Activated naive CD4-positive, alpha-beta T cell treated with anti-CD3 and anti-CD28 coated beads for 36 hours (primary cell): ENCODE measurements at regions of chr5 and their contacts with region 1.

Region 1: DNA sequence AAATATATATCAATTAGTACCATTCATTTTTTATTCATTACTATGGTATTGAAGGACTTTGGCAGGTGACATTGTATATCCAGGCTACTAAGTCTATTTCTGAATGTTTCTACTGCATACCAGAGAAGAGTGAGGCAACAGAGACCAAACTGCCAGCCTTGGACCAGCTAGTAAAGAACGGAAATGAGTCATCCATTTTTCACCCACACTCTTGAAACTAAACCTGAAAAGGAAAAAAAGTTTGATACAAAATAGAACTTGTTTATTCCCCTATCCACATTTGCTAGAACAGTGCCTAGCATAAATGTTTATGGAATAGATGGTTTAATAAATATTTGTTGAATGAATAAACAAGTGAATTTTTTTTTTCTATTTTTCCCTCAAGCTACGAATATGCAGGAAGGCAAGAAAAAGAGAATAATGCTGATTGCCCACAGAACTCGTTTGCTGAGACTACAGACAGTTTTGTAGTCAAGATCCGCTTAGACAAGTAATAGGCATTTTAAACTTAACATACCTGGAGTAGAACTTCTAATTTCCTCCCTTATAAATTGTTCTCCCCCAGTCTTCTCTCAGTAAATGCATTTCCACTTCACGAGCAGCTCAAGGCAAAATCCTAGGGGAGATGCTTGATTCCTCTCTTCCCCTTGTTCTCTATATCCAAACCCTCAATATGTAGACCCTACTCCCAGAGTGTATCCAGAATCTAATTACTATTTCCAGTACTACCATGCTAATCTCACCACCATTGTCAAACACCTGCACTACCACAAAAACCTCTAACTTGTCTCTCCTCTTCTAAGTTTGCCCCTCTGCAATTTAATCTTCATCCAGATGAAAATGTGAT is 146.2 kb upstream of the RASA1 start:
- DNase-seq: peak; percentile 58
- H3K4me3 Mint-ChIP-seq: no peak overlapping the region
- H3K27ac Mint-ChIP-seq: peak overlapping the region; percentile 4
- H3K4me1 Mint-ChIP-seq: peaks cover 56% of the 10 kb centered on the region
- H3K27me3 Mint-ChIP-seq: no peaks in the 10 kb centered on the region

Region 2: GRCh38 chr5:86617756-86618576 is 503.6 kb before region 1 on chr5 and contains the start of gene COX7C:
- CTCF ChIA-PET with region 1: no interaction called
- intact Hi-C with region 1: loop called (anchors 2 kb)
- DNase-seq: peak; percentile 96
- H3K4me3 Mint-ChIP-seq: peak within 1 kb of the TSS; percentile 100
- H3K27ac Mint-ChIP-seq: peak within 1 kb of the TSS; percentile 99
- H3K4me1 Mint-ChIP-seq: peaks cover 21% of the 10 kb centered on the region
- H3K27me3 Mint-ChIP-seq: peaks cover 2% of the 10 kb centered on the region
- total RNA-seq, gene COX7C: 925 to 952 TPM

Region 3: DNA sequence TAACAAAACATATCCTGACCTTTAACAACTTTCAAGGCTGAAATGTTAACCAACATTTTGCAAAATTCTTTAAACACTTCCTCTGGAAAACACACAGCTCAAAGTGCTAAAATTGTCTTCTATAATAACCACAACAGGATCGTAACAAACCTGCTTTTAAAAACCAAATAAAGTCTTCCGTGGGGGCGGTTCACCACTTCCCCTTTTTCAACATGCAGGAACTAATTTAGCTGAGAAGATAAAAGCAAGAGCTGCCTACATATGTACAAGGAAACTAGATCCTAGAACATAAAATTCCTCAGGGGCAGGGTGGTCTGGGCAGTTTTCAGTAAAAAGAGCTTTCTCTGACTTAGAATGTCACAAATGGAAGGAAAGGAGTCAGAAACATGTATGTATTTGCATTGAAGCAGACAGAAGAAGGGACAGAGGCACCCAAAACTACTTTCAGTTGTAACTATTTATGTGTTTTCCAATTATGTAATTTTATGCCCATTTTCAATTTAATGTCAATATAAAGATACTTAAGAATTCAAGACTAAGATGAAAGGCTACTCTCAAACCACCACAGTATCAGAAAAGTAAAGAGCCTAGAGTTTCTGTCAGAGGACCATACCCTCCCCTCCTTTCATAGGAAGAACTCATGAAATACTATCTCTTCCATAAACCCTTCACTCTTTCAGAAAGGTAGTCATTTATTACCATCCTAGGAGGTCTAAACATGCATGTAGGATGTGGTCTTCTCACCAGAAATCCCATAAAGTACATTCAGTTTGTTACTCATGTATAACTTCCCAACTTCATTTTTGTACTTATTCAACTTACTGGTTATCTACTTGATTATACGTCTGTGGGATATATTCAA is 39.8 kb before region 1 on chr5:
- CTCF ChIA-PET with region 1: interaction called, 3 read pairs
- intact Hi-C with region 1: loop called (anchors 1 kb)
- DNase-seq: peak; percentile 47
- H3K4me3 Mint-ChIP-seq: peak overlapping the region; percentile 3
- H3K27ac Mint-ChIP-seq: no peak overlapping the region
- H3K4me1 Mint-ChIP-seq: peaks cover 25% of the 10 kb centered on the region
- H3K27me3 Mint-ChIP-seq: no peaks in the 10 kb centered on the region

Region 4: DNA sequence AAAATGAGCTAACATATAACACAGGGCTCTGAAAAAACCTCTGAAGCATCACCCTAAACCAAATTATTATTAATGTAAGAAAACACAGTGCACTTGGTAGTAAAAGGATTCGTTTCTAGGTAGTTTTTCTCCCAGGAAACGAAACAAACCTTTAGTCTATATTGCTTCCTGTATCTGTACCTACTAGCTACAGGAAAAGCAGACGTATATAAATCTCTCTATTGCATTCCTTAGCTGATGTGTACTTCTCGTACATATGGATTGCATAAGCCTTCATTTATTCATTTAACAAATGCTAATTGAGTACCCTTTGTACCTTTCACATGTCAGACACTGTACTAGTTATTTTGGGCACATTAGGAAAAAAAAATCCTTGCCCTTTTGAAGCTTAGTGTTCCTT is 61.1 kb after region 1 on chr5:
- CTCF ChIA-PET with region 1: interaction called, 3 read pairs
- intact Hi-C with region 1: loop called (anchors 2 kb)
- DNase-seq: no peak
- H3K4me3 Mint-ChIP-seq: peak overlapping the region; percentile 10
- H3K27ac Mint-ChIP-seq: no peak overlapping the region
- H3K4me1 Mint-ChIP-seq: peaks cover 20% of the 10 kb centered on the region
- H3K27me3 Mint-ChIP-seq: no peaks in the 10 kb centered on the region

Region 5: GRCh38 chr5:87267574-87268125 is 146.1 kb after region 1 on chr5 and contains the start of gene RASA1:
- CTCF ChIA-PET with region 1: no interaction called
- intact Hi-C with region 1: loop called (anchors 1 kb)
- DNase-seq: peak; percentile 90
- H3K4me3 Mint-ChIP-seq: peak within 1 kb of the TSS; percentile 100
- H3K27ac Mint-ChIP-seq: peak within 1 kb of the TSS; percentile 96
- H3K4me1 Mint-ChIP-seq: peaks cover 30% of the 10 kb centered on the region
- H3K27me3 Mint-ChIP-seq: no peaks in the 10 kb centered on the region
- total RNA-seq, gene RASA1: 15.4 to 16.2 TPM

Region 6: GRCh38 chr5:87340716-87341115 is 219.2 kb after region 1 on chr5:
- CTCF ChIA-PET with region 1: no interaction called
- intact Hi-C with region 1: loop called (anchors 1 kb)
- DNase-seq: no peak
- H3K4me3 Mint-ChIP-seq: peak overlapping the region; percentile 33
- H3K27ac Mint-ChIP-seq: peak overlapping the region; percentile 77
- H3K4me1 Mint-ChIP-seq: peaks cover 20% of the 10 kb centered on the region
- H3K27me3 Mint-ChIP-seq: no peaks in the 10 kb centered on the region

Region 7: DNA sequence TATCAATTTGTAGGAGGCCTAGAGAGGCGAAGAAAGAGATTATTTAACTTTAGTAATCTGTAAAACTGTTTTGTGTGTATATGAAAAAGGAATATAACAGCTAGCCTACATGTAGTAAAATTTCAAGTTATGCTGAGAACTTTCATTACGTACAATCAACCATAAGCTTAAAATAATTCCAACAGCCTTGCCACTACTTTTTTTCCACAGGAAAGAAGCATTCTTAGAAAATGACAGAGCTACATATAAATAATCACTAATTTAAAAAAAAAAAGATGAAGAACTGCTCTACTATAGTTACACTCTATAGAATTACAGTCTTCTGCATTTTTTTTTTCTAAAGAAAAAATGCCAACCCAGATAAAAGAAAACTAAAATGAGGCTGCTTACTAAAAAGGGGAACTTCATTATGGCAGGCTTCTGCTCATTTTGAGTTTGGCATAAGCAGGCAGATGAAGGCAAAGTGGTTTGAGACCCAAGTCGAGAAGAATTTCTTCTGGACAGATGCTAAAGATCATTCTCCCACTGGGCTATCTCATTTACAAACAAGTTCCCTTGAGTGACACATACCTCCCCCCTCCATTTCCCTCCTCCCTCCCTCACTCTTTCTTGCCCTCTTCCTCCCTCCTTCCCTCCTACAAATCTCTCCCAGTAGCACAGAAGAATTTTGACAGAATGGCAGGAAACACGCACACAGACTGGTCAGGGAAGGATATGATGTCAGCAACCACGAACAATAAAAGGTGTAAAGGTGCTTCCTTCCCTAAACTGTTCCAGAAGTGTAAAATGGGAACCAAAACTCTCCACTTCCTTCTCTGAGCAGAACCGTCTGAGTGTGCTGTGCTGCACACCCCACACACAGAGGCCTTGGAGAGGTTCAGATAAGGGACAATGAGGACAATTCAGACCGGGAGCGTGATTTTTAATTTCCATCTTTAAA is 1705.4 kb after region 1 on chr5:
- CTCF ChIA-PET with region 1: no interaction called
- intact Hi-C with region 1: loop called (anchors 2 kb)
- DNase-seq: peak; percentile 8
- H3K4me3 Mint-ChIP-seq: no peak overlapping the region
- H3K27ac Mint-ChIP-seq: no peak overlapping the region
- H3K4me1 Mint-ChIP-seq: peaks cover 39% of the 10 kb centered on the region
- H3K27me3 Mint-ChIP-seq: peaks cover 18% of the 10 kb centered on the region